ENCODE measurements at regions of chr20 and their contacts with region 1.

Region 1: DNA sequence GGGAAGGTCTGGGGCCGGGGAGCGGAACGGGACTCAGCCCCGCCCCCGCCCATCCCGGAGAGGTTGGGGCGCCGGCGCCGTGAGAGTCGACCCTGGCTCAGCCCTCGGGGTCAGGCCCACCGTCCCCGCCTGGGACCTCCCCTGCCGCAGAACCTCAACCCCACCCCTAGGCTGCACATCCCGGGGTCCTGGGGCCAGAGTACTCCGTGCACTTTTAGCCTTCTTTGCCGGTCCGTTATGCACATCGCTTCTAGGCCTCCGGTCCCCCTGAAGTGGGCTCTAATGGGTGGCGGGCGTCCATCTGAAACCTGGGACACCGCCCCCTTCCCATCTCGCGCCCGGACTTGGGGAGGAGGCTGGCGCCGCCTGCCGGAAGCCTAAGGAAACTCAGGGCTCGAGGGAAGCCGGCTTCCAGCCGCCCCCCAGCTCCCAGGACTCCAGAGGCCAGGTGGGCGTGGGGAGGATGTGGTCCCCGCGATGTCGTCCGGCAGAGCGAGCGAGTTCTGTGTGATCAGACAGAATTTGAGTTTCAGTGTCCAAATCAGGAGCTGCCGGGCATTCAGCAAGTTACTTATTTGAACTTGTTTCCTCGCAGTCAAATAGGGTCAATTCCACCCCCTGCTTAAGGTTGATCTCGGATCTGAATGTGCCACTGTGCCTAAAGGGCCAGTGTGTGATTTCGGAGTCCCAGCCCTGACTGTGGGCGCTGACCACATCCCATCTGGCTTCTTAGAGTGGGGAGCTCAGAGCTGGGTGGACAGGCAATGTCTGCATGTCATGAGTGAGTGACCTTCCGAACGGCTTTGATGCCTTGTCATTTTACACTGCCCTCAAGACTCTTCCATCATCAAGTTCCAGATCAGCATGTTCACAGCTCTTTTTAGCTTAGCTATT is 47.6 kb downstream of the CPXM1 start:
- DNase-seq: no peak
- H3K4me3 ChIP-seq: peak overlapping the region; percentile 54
- CTCF ChIP-seq: peak; percentile 91

Region 2: DNA sequence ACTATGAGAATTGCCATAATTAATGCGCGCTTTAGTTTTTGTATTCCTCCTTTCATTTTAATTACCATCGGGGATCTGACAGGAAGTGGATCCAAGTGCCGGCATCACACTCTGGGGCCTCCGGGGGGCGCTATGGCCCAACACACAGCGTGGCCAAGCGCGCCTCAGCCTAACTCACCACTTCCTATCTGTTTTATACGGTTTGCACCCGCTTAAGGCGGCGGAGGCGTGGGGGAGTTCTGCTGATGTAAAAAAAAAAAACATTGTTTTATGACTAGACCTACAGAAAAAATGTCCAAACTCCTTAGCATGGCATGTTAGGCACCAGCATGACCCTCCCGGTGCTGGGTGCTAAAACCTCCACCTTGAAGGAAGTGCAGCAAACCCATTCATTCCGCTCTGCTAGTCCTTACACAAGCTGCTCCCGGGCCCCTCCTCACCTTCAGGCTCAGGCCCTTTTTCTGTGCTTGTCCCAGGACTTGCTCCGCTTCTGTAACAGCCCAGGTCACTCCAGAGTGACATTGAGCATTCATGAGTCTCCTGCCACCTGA is 64.7 kb before region 1 on chr20:
- CTCF ChIA-PET with region 1: interaction called, 21 read pairs
- POLR2A ChIA-PET with region 1: no interaction called
- DNase-seq: peak; percentile 3
- H3K4me3 ChIP-seq: no peak overlapping the region
- CTCF ChIP-seq: peak; percentile 78

Region 3: GRCh38 chr20:2767768-2768631 is 15.2 kb after region 1 on chr20:
- CTCF ChIA-PET with region 1: interaction called, 43 read pairs
- POLR2A ChIA-PET with region 1: no interaction called
- DNase-seq: peak; percentile 9
- H3K4me3 ChIP-seq: no peak overlapping the region
- CTCF ChIP-seq: no peak

Region 4: GRCh38 chr20:2840138-2840966 is 87.5 kb after region 1 on chr20 and contains the starts of genes PCED1A and VPS16:
- CTCF ChIA-PET with region 1: interaction called, 337 read pairs
- POLR2A ChIA-PET with region 1: no interaction called
- DNase-seq: no peak
- H3K4me3 ChIP-seq: peak within 1 kb of the TSS; percentile 87
- CTCF ChIP-seq: no peak

Region 5: GRCh38 chr20:2859330-2860121 is 106.7 kb after region 1 on chr20:
- CTCF ChIA-PET with region 1: interaction called, 337 read pairs
- POLR2A ChIA-PET with region 1: no interaction called
- DNase-seq: no peak
- H3K4me3 ChIP-seq: no peak overlapping the region
- CTCF ChIP-seq: no peak

Region 6: GRCh38 chr20:3000852-3001523 is 248.2 kb after region 1 on chr20:
- CTCF ChIA-PET with region 1: interaction called, 50 read pairs
- POLR2A ChIA-PET with region 1: no interaction called
- DNase-seq: peak; percentile 24
- H3K4me3 ChIP-seq: no peak overlapping the region
- CTCF ChIP-seq: peak; percentile 35

Region 7: DNA sequence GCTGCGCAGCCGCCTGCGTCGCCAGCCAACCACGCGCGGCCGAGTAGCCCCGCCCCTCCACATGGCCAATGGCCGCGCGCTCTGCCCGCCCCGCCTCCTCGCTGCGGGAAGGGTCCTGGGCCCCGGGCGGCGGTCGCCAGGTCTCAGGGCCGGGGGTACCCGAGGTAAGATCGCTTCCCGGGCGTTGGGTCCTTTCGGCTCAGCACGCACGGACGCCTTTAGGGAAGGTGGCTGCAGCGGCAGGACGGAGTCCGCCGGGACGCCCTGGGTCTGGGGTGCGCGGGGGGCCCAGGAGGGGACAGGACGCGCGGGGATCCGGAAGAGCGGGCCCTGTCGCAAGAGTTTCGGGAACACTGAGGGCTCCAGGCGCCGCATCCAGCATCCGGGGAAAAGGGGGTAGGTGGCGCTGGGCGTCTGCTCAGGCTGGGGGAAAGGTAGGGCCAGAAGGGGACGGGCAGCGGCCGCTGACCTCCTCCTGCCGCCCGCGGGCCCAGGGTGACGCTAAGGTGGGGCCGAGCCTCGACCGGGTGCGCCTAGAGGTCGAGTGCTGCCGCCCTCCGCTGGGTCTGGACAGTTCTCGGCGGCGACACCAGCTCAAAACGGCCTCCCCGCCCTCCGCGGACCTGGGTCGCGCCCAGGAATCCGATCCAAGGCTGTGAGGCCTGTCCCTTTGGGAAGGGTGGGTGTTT is 1094.1 kb after region 1 on chr20 and contains the start of gene MAVS:
- CTCF ChIA-PET with region 1: no interaction called
- POLR2A ChIA-PET with region 1: no interaction called
- DNase-seq: no peak
- H3K4me3 ChIP-seq: peak within 1 kb of the TSS; percentile 88
- CTCF ChIP-seq: no peak

Measured in AG04449 (cell line).